ENCODE measurements at regions of chr3 and their contacts with region 1.

Region 1: DNA sequence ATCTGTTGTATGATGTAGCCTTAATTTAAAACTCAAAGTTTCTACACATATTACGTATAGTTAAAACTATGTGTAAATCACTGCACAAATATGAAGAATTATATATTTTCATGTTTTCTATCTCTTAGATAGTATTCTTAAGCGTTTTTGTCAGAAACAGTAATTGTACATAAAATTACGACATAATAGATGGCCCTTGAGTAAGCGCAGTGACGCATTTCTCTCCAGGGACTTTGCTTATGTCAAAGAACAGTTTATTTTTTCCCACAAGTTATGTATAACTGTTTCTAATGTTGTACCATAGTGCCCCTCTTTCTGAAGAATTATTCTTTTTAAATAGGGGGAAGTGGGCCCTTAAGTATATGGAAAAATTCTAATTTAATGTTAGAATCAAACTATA is 934.0 kb downstream of the VGLL3 start:
- DNase-seq: no peak
- H3K4me3 ChIP-seq: no peak overlapping the region
- H3K27ac ChIP-seq: no peak overlapping the region
- H3K4me1 ChIP-seq: no peaks in the 10 kb centered on the region
- H3K27me3 ChIP-seq: no peaks in the 10 kb centered on the region
- CTCF ChIP-seq: no peak
- EP300 ChIP-seq: no peak
- POLR2A ChIP-seq: no peak

Region 2: DNA sequence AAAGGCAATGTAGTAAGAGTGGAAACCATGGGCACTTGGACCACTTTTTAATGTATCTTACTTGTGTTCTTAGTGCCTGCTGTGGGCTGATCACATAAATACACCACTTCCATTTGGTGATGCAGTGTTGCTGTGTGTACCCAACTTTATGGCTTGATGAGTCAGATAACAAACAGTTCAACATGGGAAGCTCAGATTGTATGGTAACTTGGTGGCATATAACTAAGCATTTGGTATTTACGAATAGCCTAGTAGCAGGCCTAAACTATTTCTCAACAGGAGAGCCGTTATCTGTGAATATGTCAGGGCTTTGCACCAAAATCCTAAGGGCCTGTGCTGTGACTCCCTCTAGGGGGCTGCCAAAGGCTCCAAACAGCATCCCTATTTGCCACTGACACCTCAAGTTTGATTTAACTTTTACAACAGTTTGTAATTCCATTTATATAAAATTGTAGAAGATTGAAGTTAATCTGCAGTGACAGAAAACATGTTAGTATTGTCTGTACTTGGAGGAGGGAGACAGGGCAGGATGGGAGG is 1738.6 kb before region 1 on chr3:
- in situ Hi-C with region 1: no loop called
- intact Hi-C with region 1: loop called (anchors 5 kb)
- DNase-seq: no peak
- H3K4me3 ChIP-seq: no peak overlapping the region
- H3K27ac ChIP-seq: no peak overlapping the region
- H3K4me1 ChIP-seq: no peaks in the 10 kb centered on the region
- H3K27me3 ChIP-seq: no peaks in the 10 kb centered on the region
- CTCF ChIP-seq: no peak
- EP300 ChIP-seq: no peak
- POLR2A ChIP-seq: no peak

Region 3: GRCh38 chr3:85781806-85782205 is 275.2 kb before region 1 on chr3:
- in situ Hi-C with region 1: no loop called
- intact Hi-C with region 1: no loop called
- DNase-seq: no peak
- H3K4me3 ChIP-seq: no peak overlapping the region
- H3K27ac ChIP-seq: no peak overlapping the region
- H3K4me1 ChIP-seq: no peaks in the 10 kb centered on the region
- H3K27me3 ChIP-seq: no peaks in the 10 kb centered on the region
- CTCF ChIP-seq: no peak
- EP300 ChIP-seq: no peak
- POLR2A ChIP-seq: no peak

Region 4: DNA sequence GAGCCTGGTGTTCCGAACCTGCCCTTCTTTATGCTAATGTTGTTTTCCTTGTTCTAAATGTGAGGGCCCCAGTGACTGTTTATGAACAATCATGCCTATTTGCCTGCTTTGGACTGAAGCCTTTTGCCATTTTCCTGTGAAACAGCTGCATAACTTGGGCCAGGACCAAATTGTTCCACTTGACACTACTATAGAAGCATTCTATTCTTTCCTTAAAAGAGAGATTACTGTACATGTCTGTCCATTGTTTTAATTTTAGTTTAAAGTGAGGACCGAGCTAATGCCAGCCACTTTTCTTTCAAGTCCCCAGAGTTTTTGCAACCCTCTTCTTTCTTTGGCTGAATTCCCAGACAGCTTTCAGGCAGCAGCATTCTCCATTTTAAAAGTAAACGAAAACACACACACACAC is 117.9 kb before region 1 on chr3:
- in situ Hi-C with region 1: no loop called
- intact Hi-C with region 1: no loop called
- DNase-seq: no peak
- H3K4me3 ChIP-seq: no peak overlapping the region
- H3K27ac ChIP-seq: no peak overlapping the region
- H3K4me1 ChIP-seq: no peaks in the 10 kb centered on the region
- H3K27me3 ChIP-seq: no peaks in the 10 kb centered on the region
- CTCF ChIP-seq: no peak
- EP300 ChIP-seq: no peak
- POLR2A ChIP-seq: no peak

Region 5: DNA sequence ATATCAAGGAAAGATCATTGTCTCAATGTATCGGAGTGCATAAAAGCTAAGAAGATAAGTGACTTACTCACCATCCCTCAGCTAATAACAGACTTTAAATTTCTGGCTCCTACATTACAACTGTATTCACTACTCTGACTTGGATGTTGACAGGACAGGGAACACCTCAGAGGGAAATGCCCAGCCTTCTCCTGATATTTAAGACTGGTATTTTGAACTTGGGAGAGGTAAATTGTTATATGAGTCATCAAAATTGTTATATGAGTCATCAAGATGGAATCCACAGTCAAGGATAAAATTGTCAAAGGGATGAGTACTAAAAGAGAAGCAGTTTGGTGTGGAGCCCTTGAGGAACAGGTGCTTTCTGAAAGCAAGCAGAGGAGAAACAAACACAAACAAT is 27.4 kb before region 1 on chr3:
- in situ Hi-C with region 1: no loop called
- intact Hi-C with region 1: no loop called
- DNase-seq: no peak
- H3K4me3 ChIP-seq: no peak overlapping the region
- H3K27ac ChIP-seq: no peak overlapping the region
- H3K4me1 ChIP-seq: no peaks in the 10 kb centered on the region
- H3K27me3 ChIP-seq: no peaks in the 10 kb centered on the region
- CTCF ChIP-seq: no peak
- EP300 ChIP-seq: no peak
- POLR2A ChIP-seq: no peak